Stomach (tissue), 19 donors: ENCODE measurements at regions of chr2 and their contacts with region 1.

Region 1: DNA sequence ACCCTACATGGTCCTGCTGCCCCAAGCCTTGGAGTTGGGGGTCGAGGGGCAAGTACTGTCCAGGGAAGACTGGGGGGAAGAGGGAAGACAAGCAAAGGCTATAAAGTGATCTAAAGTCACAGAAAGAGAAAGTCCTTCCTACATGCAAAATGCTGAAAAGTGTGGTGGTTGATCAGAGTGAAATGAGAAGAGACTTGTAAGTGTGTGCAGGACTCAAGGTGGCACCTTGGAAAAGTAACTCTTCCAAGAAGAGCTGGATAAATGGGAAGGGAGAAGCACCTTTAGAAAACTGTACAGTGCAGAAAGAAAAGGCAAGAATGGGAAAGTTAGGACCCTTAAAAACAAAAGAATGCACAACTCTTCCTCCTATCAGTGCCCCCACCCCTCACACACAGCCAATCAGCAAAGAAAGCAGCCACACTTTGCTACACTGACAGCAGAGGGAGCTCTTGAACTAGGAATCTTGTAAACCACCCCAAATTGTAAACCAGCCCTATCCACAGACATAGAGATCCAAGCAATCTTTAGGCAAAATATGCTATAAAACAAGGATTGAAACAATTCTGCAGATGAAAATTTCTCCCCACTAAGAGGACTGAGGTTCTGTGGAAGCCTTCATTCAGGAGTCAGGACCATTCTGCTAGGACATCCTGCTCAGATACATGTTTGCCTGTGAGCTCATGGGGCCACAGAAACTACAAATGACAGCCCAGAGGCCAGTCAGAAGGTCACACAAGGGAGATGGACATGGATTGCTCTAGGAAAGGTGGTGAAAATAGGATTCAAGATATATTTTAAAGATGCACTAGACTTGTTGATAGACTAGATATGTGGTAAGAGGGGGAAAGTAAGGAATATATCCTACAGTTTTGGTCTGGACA is 146.4 kb downstream of the FTCDNL1 start:
- DNase-seq: peak in 1 of 2 donors; percentile 46
- H3K4me3 ChIP-seq: no peak overlapping the region
- H3K27ac ChIP-seq: no peak overlapping the region
- H3K4me1 ChIP-seq: no peaks in the 10 kb centered on the region
- H3K27me3 ChIP-seq: no peaks in the 10 kb centered on the region
- CTCF ChIP-seq: peak in 5 of 7 experiments; percentile 19 to 55 (median 48)
- EP300 ChIP-seq: no peak
- POLR2A ChIP-seq: no peak

Region 2: DNA sequence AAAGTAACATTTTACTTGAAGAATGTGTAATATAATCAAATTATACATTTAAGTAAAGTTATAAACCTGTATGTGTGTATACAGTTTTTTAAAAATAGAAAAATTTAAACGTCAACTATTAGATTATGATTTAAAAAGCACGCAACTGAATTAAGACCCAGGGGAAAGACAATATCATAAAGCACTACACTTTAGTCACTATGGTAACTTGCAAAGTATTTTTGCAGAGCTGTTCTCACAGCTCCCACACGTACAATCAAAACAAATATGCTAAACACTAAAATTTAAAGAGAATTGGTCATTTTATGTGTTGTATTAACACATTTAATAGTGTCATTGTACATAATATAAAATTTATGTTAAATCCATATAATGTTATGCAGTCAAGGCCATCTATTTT is 86.7 kb after region 1 on chr2:
- intact Hi-C with region 1: no loop called
- DNase-seq: no peak
- H3K4me3 ChIP-seq: no peak overlapping the region
- H3K27ac ChIP-seq: no peak overlapping the region
- H3K4me1 ChIP-seq: no peaks in the 10 kb centered on the region
- H3K27me3 ChIP-seq: no peaks in the 10 kb centered on the region
- CTCF ChIP-seq: no peak
- EP300 ChIP-seq: no peak
- POLR2A ChIP-seq: no peak

Region 3: DNA sequence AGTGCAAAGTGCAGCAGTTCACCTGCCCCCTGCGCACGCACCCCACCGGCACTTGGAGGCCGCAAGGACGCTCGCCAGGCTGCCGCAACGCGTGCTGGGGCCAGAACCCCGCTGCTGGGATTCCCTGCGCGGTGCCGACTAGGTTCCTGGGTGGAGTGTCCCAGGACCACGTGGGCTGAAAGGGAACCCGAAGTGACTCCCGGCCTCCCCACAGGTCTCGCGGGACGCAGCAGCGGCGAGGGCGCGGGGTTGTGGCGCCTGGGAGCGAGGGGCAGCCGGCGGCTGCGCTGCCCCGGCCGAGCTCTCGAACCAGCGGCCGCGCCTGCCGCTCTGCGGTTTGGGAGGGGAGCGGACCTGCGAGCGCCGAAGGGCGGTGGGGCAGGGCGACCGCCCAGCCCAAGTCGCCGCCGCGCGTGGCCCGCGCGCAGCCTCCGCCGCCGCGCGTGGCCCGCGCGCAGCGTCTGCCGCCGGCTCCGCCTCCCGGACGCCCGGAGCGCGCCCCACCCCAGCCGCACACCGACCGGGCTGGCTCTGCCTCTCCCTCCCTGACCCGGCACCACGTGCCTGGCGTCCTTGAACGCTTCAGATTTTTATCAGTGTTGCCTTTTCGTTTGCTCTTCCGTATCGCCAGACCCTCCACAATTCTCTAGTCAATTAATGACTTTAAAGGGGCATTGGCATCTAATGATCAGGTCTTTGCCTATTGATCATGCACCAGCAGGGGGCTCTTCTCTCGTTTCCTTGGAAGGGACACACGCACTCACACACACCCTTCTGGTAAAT is 146.3 kb after region 1 on chr2 and contains the start of gene FTCDNL1:
- intact Hi-C with region 1: loop called (anchors 10 kb)
- DNase-seq: peak; percentile 71 to 88
- H3K4me3 ChIP-seq: peak within 1 kb of the TSS; percentile 69 to 91 (median 81)
- H3K27ac ChIP-seq: peak within 1 kb of the TSS; percentile 22 to 72 (median 55)
- H3K4me1 ChIP-seq: peaks cover 0 to 16% (median 11%) of the 10 kb centered on the region in 4 donors
- H3K27me3 ChIP-seq: no peaks in the 10 kb centered on the region
- CTCF ChIP-seq: peak in 5 of 7 experiments; percentile 20 to 59 (median 47)
- EP300 ChIP-seq: no peak
- POLR2A ChIP-seq: no peak
- total RNA-seq, gene FTCDNL1: 0.58 to 2.8 TPM in 2 of 5 donors, not detected in the others